ENCODE measurements at regions of chr1 and their contacts with region 1.

Region 1: GRCh38 chr1:116737020-116737854 is 17.0 kb upstream of the CD2 start:
- DNase-seq: peak; percentile 57 to 85 (median 80)
- ATAC-seq: peak; percentile 69
- H3K4me3 ChIP-seq: peak overlapping the region; percentile 28
- H3K4me3 Mint-ChIP-seq: peak overlapping the region; percentile 74 to 87 (median 82)
- H3K27ac ChIP-seq: peak overlapping the region; percentile 96
- H3K27ac Mint-ChIP-seq: peak overlapping the region; percentile 95 to 100 (median 98)
- H3K4me1 ChIP-seq: peaks cover 26 to 44% of the 10 kb centered on the region in 2 donors
- H3K4me1 Mint-ChIP-seq: peaks cover 39 to 54% (median 46%) of the 10 kb centered on the region in 7 donors
- H3K27me3 ChIP-seq: no peaks in the 10 kb centered on the region
- H3K27me3 Mint-ChIP-seq: no peaks in the 10 kb centered on the region

Region 2: GRCh38 chr1:116748272-116748671 is 11.0 kb after region 1 on chr1:
- CTCF ChIA-PET with region 1: interaction called, 24 read pairs
- POLR2A ChIA-PET with region 1: interaction called, 163 read pairs
- intact Hi-C with region 1: no loop called
- DNase-seq: no peak
- ATAC-seq: no peak
- H3K4me3 ChIP-seq: no peak overlapping the region
- H3K4me3 Mint-ChIP-seq: no peak overlapping the region
- H3K27ac ChIP-seq: no peak overlapping the region
- H3K27ac Mint-ChIP-seq: peak overlapping the region in 6 of 9 donors; percentile 31 to 73 (median 52)
- H3K4me1 ChIP-seq: peaks cover 19% of the 10 kb centered on the region in 2 donors
- H3K4me1 Mint-ChIP-seq: peaks cover 14 to 33% (median 27%) of the 10 kb centered on the region in 7 donors
- H3K27me3 ChIP-seq: no peaks in the 10 kb centered on the region
- H3K27me3 Mint-ChIP-seq: no peaks in the 10 kb centered on the region

Region 3: DNA sequence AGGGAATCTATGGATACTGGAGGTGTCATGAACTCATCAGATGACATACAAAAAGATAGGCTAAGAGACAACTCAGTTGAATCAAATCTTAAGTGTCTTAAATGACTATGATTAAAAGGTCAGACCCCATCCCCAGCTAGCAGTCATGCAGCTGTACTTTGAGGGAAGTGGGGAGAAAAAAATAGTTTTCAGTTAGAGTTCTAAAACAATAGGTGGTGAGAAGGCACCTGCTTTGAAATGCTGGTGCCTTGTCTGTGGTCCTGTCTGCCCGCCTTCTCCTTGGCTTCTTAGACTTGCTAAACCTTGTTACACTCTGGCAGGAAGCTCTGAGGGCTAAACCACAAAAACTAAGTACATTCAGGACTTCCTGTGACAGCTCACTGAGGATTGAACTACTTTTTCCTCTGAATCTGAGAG is 32.3 kb after region 1 on chr1:
- CTCF ChIA-PET with region 1: interaction called, 60 read pairs
- POLR2A ChIA-PET with region 1: interaction called, 126 read pairs
- intact Hi-C with region 1: loop called (anchors 1 kb)
- DNase-seq: peak in 8 of 9 donors; percentile 60 to 92 (median 86)
- ATAC-seq: peak; percentile 91
- H3K4me3 ChIP-seq: peak overlapping the region; percentile 24
- H3K4me3 Mint-ChIP-seq: peak overlapping the region; percentile 51 to 99 (median 78)
- H3K27ac ChIP-seq: peak overlapping the region; percentile 89
- H3K27ac Mint-ChIP-seq: peak overlapping the region; percentile 84 to 100 (median 97)
- H3K4me1 ChIP-seq: peaks cover 80 to 81% of the 10 kb centered on the region in 2 donors
- H3K4me1 Mint-ChIP-seq: peaks cover 64 to 97% (median 91%) of the 10 kb centered on the region in 7 donors
- H3K27me3 ChIP-seq: no peaks in the 10 kb centered on the region
- H3K27me3 Mint-ChIP-seq: no peaks in the 10 kb centered on the region

Region 4: GRCh38 chr1:116853670-116854402 is 116.6 kb after region 1 on chr1:
- CTCF ChIA-PET with region 1: interaction called, 5 read pairs
- POLR2A ChIA-PET with region 1: no interaction called
- intact Hi-C with region 1: loop called in 1 of 2 experiments (anchors 1 kb)
- DNase-seq: no peak
- ATAC-seq: peak; percentile 48
- H3K4me3 ChIP-seq: no peak overlapping the region
- H3K4me3 Mint-ChIP-seq: no peak overlapping the region
- H3K27ac ChIP-seq: no peak overlapping the region
- H3K27ac Mint-ChIP-seq: peak overlapping the region in 4 of 9 donors; percentile 43 to 87 (median 70)
- H3K4me1 ChIP-seq: peaks cover 0 to 5% of the 10 kb centered on the region in 2 donors
- H3K4me1 Mint-ChIP-seq: peaks cover 13 to 27% (median 17%) of the 10 kb centered on the region in 7 donors
- H3K27me3 ChIP-seq: no peaks in the 10 kb centered on the region
- H3K27me3 Mint-ChIP-seq: no peaks in the 10 kb centered on the region

Region 5: DNA sequence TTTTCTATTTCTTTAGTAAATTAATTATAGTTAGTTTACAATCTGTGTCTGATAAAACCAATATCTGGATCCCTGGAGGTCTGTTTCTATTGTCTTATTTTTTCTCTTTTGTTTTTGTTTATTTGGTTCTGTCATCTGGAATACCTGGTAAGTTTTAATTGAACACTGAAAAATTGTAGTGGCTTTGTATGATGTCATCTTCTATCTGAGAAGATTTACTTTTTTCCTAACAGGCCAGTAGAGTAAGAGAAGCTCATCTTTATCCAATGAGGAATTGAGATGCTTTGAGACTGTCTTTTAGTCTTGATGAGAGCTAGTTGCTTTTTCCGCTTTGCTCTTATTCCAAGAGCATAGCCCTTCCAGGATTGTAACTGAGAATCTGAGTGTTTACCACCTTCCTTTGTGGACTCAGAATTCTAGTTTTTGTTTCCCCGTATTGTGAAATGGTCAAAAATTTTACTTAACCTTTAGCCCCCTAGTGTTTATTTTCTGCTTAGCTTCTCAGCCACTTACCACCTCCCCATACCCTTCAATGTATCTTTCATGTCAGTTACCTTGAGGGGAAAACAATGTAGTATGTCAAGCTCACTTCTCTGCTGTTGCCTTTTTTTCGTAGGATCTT is 197.5 kb after region 1 on chr1:
- CTCF ChIA-PET with region 1: interaction called, 24 read pairs
- POLR2A ChIA-PET with region 1: interaction called, 4 read pairs
- intact Hi-C with region 1: loop called (anchors 1 kb)
- DNase-seq: peak in 5 of 9 donors; percentile 34 to 46 (median 39)
- ATAC-seq: peak; percentile 58
- H3K4me3 ChIP-seq: no peak overlapping the region
- H3K4me3 Mint-ChIP-seq: peak overlapping the region in 4 of 10 donors; percentile 4 to 40 (median 19)
- H3K27ac ChIP-seq: no peak overlapping the region
- H3K27ac Mint-ChIP-seq: peak overlapping the region in 8 of 9 donors; percentile 21 to 82 (median 52)
- H3K4me1 ChIP-seq: peaks cover 20 to 22% of the 10 kb centered on the region in 2 donors
- H3K4me1 Mint-ChIP-seq: peaks cover 14 to 28% (median 24%) of the 10 kb centered on the region in 7 donors
- H3K27me3 ChIP-seq: no peaks in the 10 kb centered on the region
- H3K27me3 Mint-ChIP-seq: no peaks in the 10 kb centered on the region

Region 6: DNA sequence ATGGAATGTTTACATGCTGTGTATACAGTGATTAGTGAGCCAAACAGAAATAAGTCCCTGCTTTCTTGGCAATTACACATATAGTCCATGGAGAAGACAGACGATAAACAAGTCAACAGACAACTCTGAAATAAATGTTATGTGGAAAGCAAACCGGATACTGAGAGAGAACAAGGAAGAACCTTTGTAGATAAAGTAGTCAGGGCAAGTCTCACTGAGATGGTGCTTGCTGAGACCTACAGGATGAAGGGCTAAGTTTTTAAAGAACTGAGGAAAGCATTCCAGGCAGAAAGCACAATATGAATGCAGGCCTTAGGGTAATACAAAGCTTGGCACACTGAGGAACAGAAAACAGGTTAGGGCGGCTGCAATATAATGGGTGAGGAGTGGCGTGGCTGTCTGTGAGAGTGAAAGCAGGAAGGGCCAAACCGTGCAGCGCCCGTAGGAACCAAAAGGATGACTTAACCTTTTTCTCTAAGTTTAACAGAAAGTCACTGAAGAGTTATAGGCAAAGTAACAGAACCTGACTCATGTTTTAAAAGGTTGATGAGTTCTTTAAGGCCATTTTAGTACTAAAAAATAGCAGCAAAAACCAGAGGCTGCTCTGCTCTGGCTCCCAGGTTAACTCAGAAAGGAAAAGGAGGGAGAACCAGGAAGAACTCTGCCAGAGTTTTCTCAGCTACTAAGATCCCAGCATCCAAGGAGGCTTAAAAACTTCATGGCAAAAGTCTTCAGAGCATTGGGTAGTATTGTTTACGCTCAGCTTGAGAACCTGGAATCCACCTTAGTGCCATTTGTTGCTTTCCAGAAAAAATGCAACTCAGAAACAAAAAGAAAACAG is 314.2 kb after region 1 on chr1:
- CTCF ChIA-PET with region 1: interaction called, 13 read pairs
- POLR2A ChIA-PET with region 1: interaction called, 7 read pairs
- intact Hi-C with region 1: loop called (anchors 1 kb)
- DNase-seq: peak in 6 of 9 donors; percentile 13 to 34 (median 28)
- ATAC-seq: peak; percentile 34
- H3K4me3 ChIP-seq: peak overlapping the region; percentile 26
- H3K4me3 Mint-ChIP-seq: peak overlapping the region; percentile 49 to 94 (median 84)
- H3K27ac ChIP-seq: peak overlapping the region; percentile 54
- H3K27ac Mint-ChIP-seq: peak overlapping the region; percentile 87 to 99 (median 95)
- H3K4me1 ChIP-seq: peaks cover 6 to 45% of the 10 kb centered on the region in 2 donors
- H3K4me1 Mint-ChIP-seq: peaks cover 30 to 66% (median 58%) of the 10 kb centered on the region in 7 donors
- H3K27me3 ChIP-seq: no peaks in the 10 kb centered on the region
- H3K27me3 Mint-ChIP-seq: no peaks in the 10 kb centered on the region

Measured in naive thymus-derived CD4-positive, alpha-beta T cell (primary cell).